ENCODE measurements at regions of chr2 and their contacts with region 1.

Region 1: GRCh38 chr2:94986392-94986963 is 39.0 kb upstream of the MAL start:
- DNase-seq: peak; percentile 57
- H3K4me3 Mint-ChIP-seq: no peak overlapping the region
- H3K27ac Mint-ChIP-seq: no peak overlapping the region
- H3K4me1 Mint-ChIP-seq: no peaks in the 10 kb centered on the region
- H3K27me3 Mint-ChIP-seq: peaks cover 12% of the 10 kb centered on the region

Region 2: GRCh38 chr2:94939349-94939748 is 47.1 kb before region 1 on chr2:
- CTCF ChIA-PET with region 1: no interaction called
- POLR2A ChIA-PET with region 1: no interaction called
- intact Hi-C with region 1: no loop called
- DNase-seq: no peak
- H3K4me3 Mint-ChIP-seq: no peak overlapping the region
- H3K27ac Mint-ChIP-seq: no peak overlapping the region
- H3K4me1 Mint-ChIP-seq: no peaks in the 10 kb centered on the region
- H3K27me3 Mint-ChIP-seq: peaks cover 19% of the 10 kb centered on the region

Region 3: DNA sequence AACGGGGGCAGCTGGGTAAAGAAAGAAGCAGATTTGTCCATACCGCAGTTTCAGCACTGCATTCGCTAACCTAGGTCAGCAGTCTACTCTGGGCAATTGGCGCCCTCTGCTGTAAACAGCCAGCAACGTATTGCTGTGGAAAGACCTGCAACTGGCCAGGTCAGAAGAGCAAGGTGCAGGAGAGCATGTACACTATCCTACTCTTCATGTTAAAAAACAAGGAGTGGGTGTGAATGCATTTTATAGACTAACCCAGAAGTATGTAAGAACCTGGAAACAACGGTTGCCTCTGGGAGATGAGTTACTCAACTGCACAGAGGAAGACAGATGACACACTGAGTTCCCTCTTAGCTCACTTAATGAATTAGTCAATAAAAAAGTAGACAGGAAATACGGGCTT is 128.9 kb after region 1 on chr2:
- CTCF ChIA-PET with region 1: interaction called, 14 read pairs
- POLR2A ChIA-PET with region 1: no interaction called
- intact Hi-C with region 1: no loop called
- DNase-seq: peak; percentile 83
- H3K4me3 Mint-ChIP-seq: no peak overlapping the region
- H3K27ac Mint-ChIP-seq: peak overlapping the region; percentile 38
- H3K4me1 Mint-ChIP-seq: peaks cover 41% of the 10 kb centered on the region
- H3K27me3 Mint-ChIP-seq: no peaks in the 10 kb centered on the region

Measured in activated CD4-positive, alpha-beta memory T cell treated with anti-CD3 and anti-CD28 coated beads for 36 hours (primary cell).